Dorsolateral prefrontal cortex (tissue), 120 donors: ENCODE measurements at regions of chr9 and their contacts with region 1.

Region 1: DNA sequence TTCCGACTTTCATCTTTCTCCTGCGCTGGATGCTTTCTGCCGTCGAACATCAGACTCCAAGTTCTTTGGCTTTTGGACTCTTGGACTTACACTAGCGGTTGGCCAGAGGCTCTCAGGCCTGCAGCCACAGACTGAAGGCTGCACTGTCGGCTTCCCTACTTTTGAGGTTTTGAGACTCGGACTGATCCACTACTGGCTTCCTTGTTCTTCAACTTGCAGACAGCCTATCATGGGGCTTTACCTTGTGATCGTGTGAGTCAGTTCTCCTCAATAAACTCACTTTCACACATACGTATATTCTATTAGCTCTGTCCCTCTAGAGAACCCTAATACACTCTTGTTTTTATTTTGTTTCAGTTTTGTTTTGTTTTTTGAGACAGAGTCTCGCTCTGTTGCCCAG is 10.3 kb downstream of the FKBP15 start:
- DNase-seq: no peak
- H3K4me3 ChIP-seq: no peak overlapping the region
- H3K27ac ChIP-seq: peak overlapping the region in 3 of 59 donors; percentile 29 to 41 (median 34)
- H3K27me3 ChIP-seq: no peaks in the 10 kb centered on the region
- CTCF ChIP-seq: no peak

Region 2: GRCh38 chr9:113196967-113197366 is 13.8 kb before region 1 on chr9:
- intact Hi-C with region 1: loop called in 1 of 2 experiments (anchors 1 kb)
- DNase-seq: no peak
- H3K4me3 ChIP-seq: no peak overlapping the region
- H3K27ac ChIP-seq: no peak overlapping the region
- H3K27me3 ChIP-seq: no peaks in the 10 kb centered on the region
- CTCF ChIP-seq: no peak